ENCODE measurements at regions of chr10 and their contacts with region 1.

Region 1: DNA sequence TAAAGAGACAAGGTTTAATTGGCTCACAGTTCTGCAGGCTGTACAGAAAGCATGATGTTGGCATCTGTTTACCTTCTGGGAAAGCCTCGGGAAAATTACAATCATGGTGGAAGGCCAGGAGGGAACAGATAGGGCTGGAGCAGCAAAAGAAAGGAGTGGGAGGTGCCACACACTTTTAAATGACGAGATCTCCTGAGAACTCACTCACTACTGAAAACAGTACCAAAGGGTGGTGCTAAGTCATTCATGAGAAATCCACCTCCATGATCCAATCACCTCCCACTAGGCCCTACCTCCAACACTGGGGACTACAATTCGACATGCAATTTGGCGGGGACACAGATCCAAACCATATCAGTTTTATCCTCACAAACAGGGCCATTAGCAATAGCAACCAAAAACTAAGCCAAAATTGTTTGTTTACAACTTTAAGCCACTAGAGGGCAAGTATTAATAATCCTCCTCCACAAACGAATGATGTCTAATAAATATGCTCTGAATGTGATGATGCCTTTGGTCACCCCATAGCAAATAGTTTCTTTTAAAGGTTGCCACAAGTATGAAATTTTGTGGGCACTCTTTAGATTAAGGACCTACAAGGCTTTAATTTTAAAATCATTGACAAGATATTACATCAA is 129.2 kb upstream of the NRBF2 start:
- DNase-seq: no peak
- ATAC-seq: peak; percentile 64; the same call in 2 of the 3 replicates
- H3K4me3 ChIP-seq: no peak overlapping the region
- H3K27ac ChIP-seq: no peak overlapping the region
- H3K4me1 ChIP-seq: no peaks in the 10 kb centered on the region
- H3K27me3 ChIP-seq: peaks cover 0 to 3% of the 10 kb centered on the region in 2 experiments; a peak in 1 of 4 replicates
- CTCF ChIP-seq: peak; percentile 28 to 53 (median 30); a peak in 4 of 6 replicates
- EP300 ChIP-seq: no peak
- POLR2A ChIP-seq: no peak
- RAD21 ChIP-seq: peak; percentile 38

Region 2: DNA sequence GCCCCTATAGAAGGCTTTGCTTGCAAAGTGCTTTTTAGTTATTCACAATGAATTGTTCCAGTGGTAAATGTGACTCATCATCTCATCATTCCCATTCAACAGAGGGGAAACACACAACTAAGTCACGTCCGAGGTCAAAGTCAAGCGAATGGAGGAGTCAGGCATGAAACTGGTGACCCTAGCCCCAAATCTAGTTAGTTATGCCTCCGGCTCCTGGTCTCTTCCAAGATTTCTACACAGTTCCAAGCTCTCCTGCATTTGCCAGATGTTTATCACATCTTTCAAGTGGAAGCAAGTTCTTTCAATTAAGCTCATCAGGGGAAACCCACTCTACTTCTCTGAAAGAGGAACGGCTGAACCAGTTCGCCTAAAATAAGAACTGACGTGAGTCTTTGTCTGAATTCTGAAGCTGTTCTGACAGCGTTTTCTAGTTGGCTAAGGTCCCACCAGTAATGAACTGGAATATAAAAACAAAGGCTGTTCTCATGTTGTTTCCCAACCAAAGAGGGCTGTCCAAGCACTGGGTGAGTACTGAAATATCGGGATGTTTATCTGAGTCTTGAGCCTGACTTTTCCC is 11.7 kb before region 1 on chr10:
- CTCF ChIA-PET with region 1: interaction called, 23 read pairs
- POLR2A ChIA-PET with region 1: interaction called, 5 read pairs
- RAD21 ChIA-PET with region 1: interaction called, 15 read pairs
- SMC1A ChIA-PET with region 1: interaction called, 21 read pairs
- in situ Hi-C with region 1: no loop called
- intact Hi-C with region 1: no loop called
- DNase-seq: peak; percentile 40
- ATAC-seq: peak; percentile 91
- H3K4me3 ChIP-seq: no peak overlapping the region; the same call in 1 of the 2 replicates
- H3K27ac ChIP-seq: peak overlapping the region; percentile 56
- H3K4me1 ChIP-seq: peaks cover 8% of the 10 kb centered on the region
- H3K27me3 ChIP-seq: no peaks in the 10 kb centered on the region
- CTCF ChIP-seq: no peak
- EP300 ChIP-seq: no peak; a peak in 1 of 4 replicates
- POLR2A ChIP-seq: no peak
- RAD21 ChIP-seq: no peak

Region 3: DNA sequence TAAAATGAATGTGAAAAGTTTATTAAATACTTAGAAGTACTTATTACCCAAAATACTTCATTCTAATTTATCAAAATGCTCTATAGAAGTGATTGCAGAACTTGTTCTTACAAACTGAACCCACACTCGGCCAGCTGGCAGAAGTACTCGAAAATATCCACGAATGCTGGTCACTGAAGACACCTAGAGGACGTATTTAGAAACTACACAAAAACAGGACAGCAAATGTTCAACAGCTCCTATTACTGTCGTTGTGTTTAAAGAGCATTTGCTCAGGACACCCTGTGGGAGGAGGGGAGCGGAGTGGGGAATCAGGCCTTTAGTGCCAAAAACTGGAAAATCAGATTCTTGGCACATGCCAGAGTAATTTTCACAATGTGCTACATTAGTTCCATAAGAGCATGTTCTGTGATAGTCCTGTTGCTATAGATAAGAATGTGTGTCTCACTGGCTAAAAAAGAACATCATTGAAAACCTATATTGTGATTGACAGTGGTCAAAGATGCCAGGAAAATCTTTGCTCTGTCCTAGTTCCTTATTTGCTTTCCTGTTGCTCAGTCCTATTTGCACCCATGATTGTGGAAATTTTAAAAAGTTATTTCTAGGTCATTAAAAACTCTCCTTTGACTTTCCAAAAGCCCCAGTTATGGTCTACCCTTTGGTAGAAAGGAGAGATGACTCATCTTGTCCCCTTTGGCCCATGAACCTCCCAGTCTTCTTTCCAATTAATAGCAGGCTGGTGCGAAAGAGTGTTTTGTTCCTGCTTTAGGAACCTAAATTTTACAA is 80.2 kb after region 1 on chr10:
- CTCF ChIA-PET with region 1: interaction called, 10 read pairs
- POLR2A ChIA-PET with region 1: no interaction called
- RAD21 ChIA-PET with region 1: no interaction called
- SMC1A ChIA-PET with region 1: interaction called, 8 read pairs
- in situ Hi-C with region 1: no loop called
- intact Hi-C with region 1: no loop called
- DNase-seq: peak; percentile 38
- ATAC-seq: peak; percentile 94
- H3K4me3 ChIP-seq: no peak overlapping the region
- H3K27ac ChIP-seq: no peak overlapping the region
- H3K4me1 ChIP-seq: no peaks in the 10 kb centered on the region
- H3K27me3 ChIP-seq: no peaks in the 10 kb centered on the region; a peak in 1 of 4 replicates
- CTCF ChIP-seq: peak; percentile 63 to 84 (median 76)
- EP300 ChIP-seq: no peak
- POLR2A ChIP-seq: no peak
- RAD21 ChIP-seq: peak; percentile 99